ENCODE measurements at regions of chr17 and their contacts with region 1.

Region 1: GRCh38 chr17:9924735-9925191 is 19.7 kb upstream of the RCVRN start:
- DNase-seq: no peak
- ATAC-seq: peak; percentile 67
- H3K4me3 Mint-ChIP-seq: no peak overlapping the region
- H3K27ac Mint-ChIP-seq: no peak overlapping the region
- H3K4me1 Mint-ChIP-seq: no peaks in the 10 kb centered on the region
- H3K27me3 Mint-ChIP-seq: no peaks in the 10 kb centered on the region
- CTCF ChIP-seq: peak; percentile 86

Region 2: DNA sequence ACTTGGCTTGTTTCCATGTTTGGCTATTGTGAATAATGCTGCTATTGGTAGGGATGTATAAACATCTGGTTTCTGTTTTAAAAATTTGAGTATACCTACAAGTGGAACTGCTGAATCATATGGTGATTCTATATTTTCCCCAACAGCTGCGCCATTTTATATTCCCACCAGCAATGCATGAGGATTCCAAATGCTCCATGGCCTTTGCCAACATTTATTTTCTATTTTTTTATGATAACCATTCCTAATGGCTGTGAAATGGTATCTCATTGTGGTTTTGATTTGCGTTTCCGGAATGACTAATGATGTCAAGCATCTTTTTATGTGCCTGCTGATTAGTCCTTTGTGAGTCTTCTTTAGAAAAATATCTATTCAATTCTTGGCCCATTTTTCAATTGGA is 31.2 kb before region 1 on chr17:
- CTCF ChIA-PET with region 1: no interaction called
- POLR2A ChIA-PET with region 1: no interaction called
- intact Hi-C with region 1: no loop called
- DNase-seq: no peak
- ATAC-seq: no peak
- H3K4me3 Mint-ChIP-seq: no peak overlapping the region
- H3K27ac Mint-ChIP-seq: no peak overlapping the region
- H3K4me1 Mint-ChIP-seq: no peaks in the 10 kb centered on the region
- H3K27me3 Mint-ChIP-seq: peaks cover 6% of the 10 kb centered on the region
- CTCF ChIP-seq: no peak

Region 3: DNA sequence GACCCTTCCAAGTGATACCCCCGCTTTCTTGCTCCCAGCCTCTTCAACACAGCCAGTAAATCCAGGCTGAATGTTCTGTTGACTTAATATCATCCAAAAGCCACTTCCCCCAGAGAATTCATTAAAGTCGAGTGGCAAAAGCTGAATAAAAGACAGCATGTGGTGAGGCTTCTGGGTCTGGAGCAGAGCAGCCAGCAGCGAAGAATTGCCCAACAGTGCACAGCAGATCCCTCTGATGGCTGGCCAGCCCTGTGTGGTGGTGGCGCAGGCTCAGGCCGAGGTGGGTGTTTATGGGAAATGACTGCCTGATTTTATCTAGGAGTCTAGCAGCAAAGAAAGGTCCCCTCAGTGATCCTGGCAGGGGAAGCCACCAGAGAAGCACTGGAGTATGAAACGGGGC is 10.6 kb after region 1 on chr17:
- CTCF ChIA-PET with region 1: interaction called, 11 read pairs
- POLR2A ChIA-PET with region 1: no interaction called
- intact Hi-C with region 1: no loop called
- DNase-seq: no peak
- ATAC-seq: no peak
- H3K4me3 Mint-ChIP-seq: no peak overlapping the region
- H3K27ac Mint-ChIP-seq: no peak overlapping the region
- H3K4me1 Mint-ChIP-seq: no peaks in the 10 kb centered on the region
- H3K27me3 Mint-ChIP-seq: no peaks in the 10 kb centered on the region
- CTCF ChIP-seq: no peak

Region 4: GRCh38 chr17:9959377-9959981 is 34.7 kb after region 1 on chr17:
- CTCF ChIA-PET with region 1: interaction called, 13 read pairs
- POLR2A ChIA-PET with region 1: no interaction called
- intact Hi-C with region 1: no loop called
- DNase-seq: peak; percentile 70
- ATAC-seq: peak; percentile 39
- H3K4me3 Mint-ChIP-seq: no peak overlapping the region
- H3K27ac Mint-ChIP-seq: no peak overlapping the region
- H3K4me1 Mint-ChIP-seq: no peaks in the 10 kb centered on the region
- H3K27me3 Mint-ChIP-seq: no peaks in the 10 kb centered on the region
- CTCF ChIP-seq: peak; percentile 49

Region 5: GRCh38 chr17:10050597-10051101 is 125.9 kb after region 1 on chr17:
- CTCF ChIA-PET with region 1: no interaction called
- POLR2A ChIA-PET with region 1: no interaction called
- intact Hi-C with region 1: no loop called
- DNase-seq: peak; percentile 19
- ATAC-seq: no peak
- H3K4me3 Mint-ChIP-seq: no peak overlapping the region
- H3K27ac Mint-ChIP-seq: no peak overlapping the region
- H3K4me1 Mint-ChIP-seq: peaks cover 29% of the 10 kb centered on the region
- H3K27me3 Mint-ChIP-seq: no peaks in the 10 kb centered on the region
- CTCF ChIP-seq: no peak